ENCODE measurements at regions of chr6 and their contacts with region 1.

Region 1: GRCh38 chr6:151690768-151691562 is 116.5 kb upstream of the ESR1 start:
- DNase-seq: no peak
- ATAC-seq: no peak
- H3K4me3 ChIP-seq: peak overlapping the region in 1 of 2 experiments; percentile 7; a peak in 2 of 4 replicates
- H3K27ac ChIP-seq: no peak overlapping the region
- H3K4me1 ChIP-seq: no peaks in the 10 kb centered on the region; the same call in 1 of the 2 replicates
- H3K27me3 ChIP-seq: no peaks in the 10 kb centered on the region
- CTCF ChIP-seq: no peak

Region 2: GRCh38 chr6:151546941-151547659 is 143.9 kb before region 1 on chr6:
- CTCF ChIA-PET with region 1: no interaction called
- POLR2A ChIA-PET with region 1: no interaction called
- in situ Hi-C with region 1: no loop called
- intact Hi-C with region 1: no loop called
- DNase-seq: no peak
- ATAC-seq: no peak
- H3K4me3 ChIP-seq: no peak overlapping the region
- H3K27ac ChIP-seq: no peak overlapping the region
- H3K4me1 ChIP-seq: no peaks in the 10 kb centered on the region
- H3K27me3 ChIP-seq: no peaks in the 10 kb centered on the region
- CTCF ChIP-seq: peak; percentile 57

Region 3: DNA sequence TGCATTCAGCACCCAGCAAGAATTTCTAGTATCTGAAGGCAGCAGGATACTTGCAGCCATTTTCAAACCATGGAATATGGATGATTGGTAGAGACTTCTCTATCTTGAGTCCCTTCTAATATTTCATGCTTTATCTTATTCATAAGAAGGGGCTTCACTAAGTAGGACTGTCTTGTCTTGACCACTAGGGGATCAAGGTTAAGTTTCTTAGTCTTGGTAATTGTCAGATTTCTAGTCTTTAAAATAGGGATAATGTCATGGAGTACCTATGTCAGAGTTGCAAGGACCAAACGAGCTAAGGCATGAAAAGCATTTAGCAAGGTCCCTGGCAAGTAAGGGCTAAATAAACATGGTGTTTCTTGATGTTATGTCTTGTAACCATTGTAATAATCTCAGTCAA is 48.0 kb after region 1 on chr6:
- CTCF ChIA-PET with region 1: no interaction called
- POLR2A ChIA-PET with region 1: no interaction called
- in situ Hi-C with region 1: no loop called
- intact Hi-C with region 1: no loop called
- DNase-seq: no peak
- ATAC-seq: no peak
- H3K4me3 ChIP-seq: no peak overlapping the region
- H3K27ac ChIP-seq: no peak overlapping the region
- H3K4me1 ChIP-seq: no peaks in the 10 kb centered on the region
- H3K27me3 ChIP-seq: no peaks in the 10 kb centered on the region
- CTCF ChIP-seq: no peak

Region 4: DNA sequence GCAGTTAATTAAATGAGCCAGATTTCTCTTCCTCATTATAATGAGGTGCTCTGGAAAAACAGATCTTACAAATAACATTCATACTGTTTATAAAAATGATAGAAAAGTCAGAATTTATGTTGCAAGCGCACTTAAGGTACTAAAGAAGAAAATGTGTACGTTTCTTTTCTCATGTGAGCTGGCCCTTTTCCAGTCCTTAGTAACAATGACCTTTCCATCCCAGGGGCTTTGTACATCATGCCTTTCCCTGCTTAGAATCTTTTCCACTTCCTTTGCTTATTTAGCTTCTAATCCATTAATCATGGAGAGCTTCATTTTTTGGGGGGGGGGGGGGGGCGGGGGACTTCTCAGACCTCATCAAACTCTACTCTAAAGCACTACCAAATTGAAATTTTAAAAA is 1287.1 kb after region 1 on chr6:
- CTCF ChIA-PET with region 1: no interaction called
- POLR2A ChIA-PET with region 1: interaction called, 10 read pairs
- in situ Hi-C with region 1: no loop called
- intact Hi-C with region 1: no loop called
- DNase-seq: no peak
- ATAC-seq: no peak
- H3K4me3 ChIP-seq: no peak overlapping the region
- H3K27ac ChIP-seq: no peak overlapping the region
- H3K4me1 ChIP-seq: peaks cover 43% of the 10 kb centered on the region
- H3K27me3 ChIP-seq: no peaks in the 10 kb centered on the region
- CTCF ChIP-seq: no peak